Natural killer cell (primary cell): ENCODE measurements at regions of chr12 and their contacts with region 1.

Region 1: GRCh38 chr12:120469450-120470149 is at the start of gene SRSF9:
- DNase-seq: peak; percentile 96 to 99
- ATAC-seq: peak; percentile 83 to 95 (median 86)
- H3K4me3 ChIP-seq: peak within 1 kb of the TSS; percentile 83
- H3K4me3 Mint-ChIP-seq: peak within 1 kb of the TSS; percentile 95
- H3K27ac ChIP-seq: peak within 1 kb of the TSS; percentile 86
- H3K27ac Mint-ChIP-seq: peak within 1 kb of the TSS; percentile 91 to 97
- H3K4me1 ChIP-seq: peaks cover 44% of the 10 kb centered on the region
- H3K4me1 Mint-ChIP-seq: peaks cover 76 to 77% of the 10 kb centered on the region in 2 donors
- H3K27me3 ChIP-seq: no peaks in the 10 kb centered on the region
- H3K27me3 Mint-ChIP-seq: no peaks in the 10 kb centered on the region
- CTCF ChIP-seq: peak; percentile 93
- total RNA-seq, gene SRSF9: 175 to 191 (median 179) TPM

Region 2: GRCh38 chr12:120481022-120481767 is 11.6 kb after region 1 on chr12:
- intact Hi-C with region 1: loop called (anchors 1 kb)
- DNase-seq: peak; percentile 27 to 67
- ATAC-seq: peak; percentile 76 to 91 (median 89)
- H3K4me3 ChIP-seq: no peak overlapping the region
- H3K4me3 Mint-ChIP-seq: peak overlapping the region; percentile 94
- H3K27ac ChIP-seq: peak overlapping the region; percentile 93
- H3K27ac Mint-ChIP-seq: peak overlapping the region; percentile 90 to 99
- H3K4me1 ChIP-seq: peaks cover 62% of the 10 kb centered on the region
- H3K4me1 Mint-ChIP-seq: peaks cover 52 to 54% of the 10 kb centered on the region in 2 donors
- H3K27me3 ChIP-seq: no peaks in the 10 kb centered on the region
- H3K27me3 Mint-ChIP-seq: no peaks in the 10 kb centered on the region
- CTCF ChIP-seq: no peak